CD8-positive, alpha-beta T cell (primary cell): ENCODE measurements at regions of chr11 and their contacts with region 1.

Region 1: DNA sequence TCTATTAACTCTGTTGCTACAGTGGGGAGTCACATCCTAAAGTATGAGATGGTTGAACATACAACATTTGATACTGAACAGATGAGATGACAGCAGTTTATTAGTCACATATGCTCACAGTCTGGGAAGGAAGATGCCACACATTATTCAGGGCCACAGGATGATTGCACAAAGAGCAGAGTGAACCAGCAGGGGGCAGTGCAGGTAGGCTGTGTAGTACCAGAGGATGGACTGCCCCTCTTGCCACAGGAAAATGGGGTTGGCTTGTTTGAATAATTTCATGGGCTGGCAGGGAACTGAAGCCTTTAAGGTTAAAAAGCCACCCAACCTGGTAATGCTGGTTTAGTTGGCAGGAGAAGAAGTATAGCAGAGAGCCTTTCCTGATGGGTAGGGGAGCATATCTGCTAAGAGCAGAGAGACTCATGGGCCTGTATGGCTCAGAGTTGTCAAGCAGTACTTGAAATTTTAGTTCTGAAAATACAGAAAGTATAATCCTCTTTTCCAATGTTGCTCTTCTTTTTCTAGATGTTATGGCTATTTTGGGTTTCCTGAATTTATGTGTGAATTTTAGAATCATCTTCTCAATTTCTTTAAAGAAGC is 180.4 kb upstream of the B3GAT1 start:
- DNase-seq: peak in 6 of 9 experiments; percentile 36 to 65 (median 53)
- ATAC-seq: no peak
- H3K4me3 ChIP-seq: no peak overlapping the region
- H3K4me3 Mint-ChIP-seq: no peak overlapping the region
- H3K27ac ChIP-seq: no peak overlapping the region
- H3K27ac Mint-ChIP-seq: no peak overlapping the region
- H3K4me1 ChIP-seq: no peaks in the 10 kb centered on the region
- H3K4me1 Mint-ChIP-seq: no peaks in the 10 kb centered on the region
- H3K27me3 ChIP-seq: no peaks in the 10 kb centered on the region
- H3K27me3 Mint-ChIP-seq: peaks cover 3% of the 10 kb centered on the region
- CTCF ChIP-seq: no peak

Region 2: GRCh38 chr11:134360050-134360835 is 232.2 kb before region 1 on chr11:
- CTCF ChIA-PET with region 1: no interaction called
- POLR2A ChIA-PET with region 1: no interaction called
- intact Hi-C with region 1: loop called in 1 of 2 experiments (anchors 5 kb)
- DNase-seq: peak; percentile 44 to 80 (median 69)
- ATAC-seq: peak; percentile 92
- H3K4me3 ChIP-seq: no peak overlapping the region
- H3K4me3 Mint-ChIP-seq: peak overlapping the region; percentile 15
- H3K27ac ChIP-seq: no peak overlapping the region
- H3K27ac Mint-ChIP-seq: no peak overlapping the region
- H3K4me1 ChIP-seq: peaks cover 5% of the 10 kb centered on the region
- H3K4me1 Mint-ChIP-seq: peaks cover 10% of the 10 kb centered on the region
- H3K27me3 ChIP-seq: no peaks in the 10 kb centered on the region
- H3K27me3 Mint-ChIP-seq: peaks cover 22% of the 10 kb centered on the region
- CTCF ChIP-seq: peak; percentile 71

Region 3: GRCh38 chr11:134504146-134504905 is 88.2 kb before region 1 on chr11:
- CTCF ChIA-PET with region 1: no interaction called
- POLR2A ChIA-PET with region 1: no interaction called
- intact Hi-C with region 1: no loop called
- DNase-seq: no peak
- ATAC-seq: no peak
- H3K4me3 ChIP-seq: no peak overlapping the region
- H3K4me3 Mint-ChIP-seq: no peak overlapping the region
- H3K27ac ChIP-seq: no peak overlapping the region
- H3K27ac Mint-ChIP-seq: no peak overlapping the region
- H3K4me1 ChIP-seq: no peaks in the 10 kb centered on the region
- H3K4me1 Mint-ChIP-seq: no peaks in the 10 kb centered on the region
- H3K27me3 ChIP-seq: no peaks in the 10 kb centered on the region
- H3K27me3 Mint-ChIP-seq: peaks cover 20% of the 10 kb centered on the region
- CTCF ChIP-seq: no peak